B cell (primary cell): ENCODE measurements at regions of chr15 and their contacts with region 1.

Region 1: DNA sequence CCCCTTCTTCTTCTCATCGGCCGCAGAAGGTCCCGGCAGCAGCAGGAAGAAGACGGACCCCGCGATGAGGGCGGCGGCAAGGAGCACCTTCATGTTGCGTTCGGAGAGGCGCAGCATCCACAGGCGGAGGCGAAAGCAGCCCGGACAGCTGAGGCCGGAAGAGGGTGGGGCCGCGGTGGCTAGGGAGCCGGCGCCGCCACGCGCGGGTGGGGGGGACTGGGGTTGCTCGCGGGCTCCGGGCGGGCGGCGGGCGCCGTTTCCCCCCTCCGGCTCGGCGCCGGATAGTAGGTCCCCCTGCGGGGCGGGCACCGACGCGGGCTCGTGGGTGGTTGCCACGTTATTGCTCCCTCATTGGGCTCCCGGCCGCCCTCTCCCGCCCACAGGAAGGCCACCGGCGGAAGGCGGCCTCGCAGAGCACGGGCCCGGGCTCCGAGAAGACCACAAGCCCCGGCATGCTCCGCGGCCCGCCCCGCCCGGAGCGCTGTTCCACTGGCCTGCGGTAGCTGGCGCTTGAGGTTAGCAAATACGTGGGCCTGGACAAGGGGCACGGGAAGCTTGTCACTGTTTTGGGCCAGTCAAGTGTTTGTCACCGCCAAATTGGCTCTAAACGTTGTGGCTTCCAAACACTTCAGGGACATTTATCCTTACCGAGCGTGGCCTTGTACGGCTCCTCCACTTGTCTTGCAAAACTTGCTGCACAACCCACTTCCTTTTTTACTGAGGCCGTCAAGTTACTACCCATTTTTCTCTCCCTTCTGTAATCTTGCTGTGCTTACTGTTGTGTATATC is at the start of gene PPIB:
- DNase-seq: peak; percentile 98
- ATAC-seq: peak; percentile 91
- H3K4me3 ChIP-seq: peak within 1 kb of the TSS; percentile 65 to 86 (median 85)
- H3K4me3 Mint-ChIP-seq: peak within 1 kb of the TSS; percentile 92
- H3K27ac ChIP-seq: peak within 1 kb of the TSS; percentile 72 to 87
- H3K27ac Mint-ChIP-seq: peak within 1 kb of the TSS; percentile 96
- H3K4me1 ChIP-seq: peaks cover 42 to 58% of the 10 kb centered on the region in 2 donors
- H3K4me1 Mint-ChIP-seq: peaks cover 52% of the 10 kb centered on the region
- H3K27me3 ChIP-seq: no peaks in the 10 kb centered on the region
- H3K27me3 Mint-ChIP-seq: no peaks in the 10 kb centered on the region
- CTCF ChIP-seq: peak; percentile 32
- total RNA-seq, gene PPIB: 107 and 108 TPM in 2 replicates

Region 2: DNA sequence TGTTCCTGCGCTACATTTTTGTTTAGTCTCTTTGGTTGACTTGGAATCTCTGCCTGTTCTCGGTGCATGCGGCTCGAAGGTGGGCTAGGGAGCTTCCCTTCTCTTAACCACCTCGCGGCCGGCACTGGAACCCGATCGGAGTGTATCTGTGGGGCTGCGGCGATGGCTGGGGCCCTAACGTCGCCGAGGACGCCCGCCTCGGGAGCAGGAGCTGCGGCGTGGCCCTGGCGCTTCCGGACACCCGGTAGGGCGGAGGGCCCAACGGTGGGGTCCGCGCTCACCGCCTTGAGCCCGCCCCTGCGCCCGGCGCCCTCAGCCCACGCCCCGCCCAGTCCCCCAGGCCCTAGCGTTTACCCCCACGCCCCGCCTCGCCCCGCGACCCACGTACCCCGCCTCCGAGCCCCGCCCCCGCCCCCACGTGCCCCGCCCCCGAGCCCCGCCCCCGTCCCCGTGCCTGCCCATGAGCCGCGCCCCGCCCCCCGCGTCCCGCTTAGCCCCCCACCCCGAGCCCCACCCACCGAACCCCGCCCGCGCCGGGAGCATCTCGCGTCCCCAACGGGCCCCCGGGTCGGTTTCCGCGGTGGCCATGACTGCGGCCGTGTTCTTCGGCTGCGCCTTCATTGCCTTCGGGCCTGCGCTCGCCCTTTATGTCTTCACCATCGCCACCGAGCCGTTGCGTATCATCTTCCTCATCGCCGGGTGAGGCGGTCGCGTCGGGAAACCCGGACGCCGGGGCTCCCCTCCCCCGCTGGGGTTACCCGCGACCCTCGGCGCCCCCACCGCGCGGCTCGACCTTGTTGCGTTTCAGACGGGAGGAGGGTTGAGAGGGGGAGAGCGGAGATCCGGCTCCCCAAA is 885.8 kb before region 1 on chr15 and contains the start of gene APH1B:
- CTCF ChIA-PET with region 1: no interaction called
- POLR2A ChIA-PET with region 1: no interaction called
- intact Hi-C with region 1: loop called (anchors 1 kb)
- DNase-seq: peak; percentile 85
- ATAC-seq: peak; percentile 97
- H3K4me3 ChIP-seq: peak within 1 kb of the TSS; percentile 74 to 98 (median 94)
- H3K4me3 Mint-ChIP-seq: peak within 1 kb of the TSS; percentile 92
- H3K27ac ChIP-seq: peak within 1 kb of the TSS; percentile 67 to 79
- H3K27ac Mint-ChIP-seq: peak within 1 kb of the TSS; percentile 94
- H3K4me1 ChIP-seq: peaks cover 12 to 14% of the 10 kb centered on the region in 2 donors
- H3K4me1 Mint-ChIP-seq: peaks cover 19% of the 10 kb centered on the region
- H3K27me3 ChIP-seq: no peaks in the 10 kb centered on the region
- H3K27me3 Mint-ChIP-seq: no peaks in the 10 kb centered on the region
- CTCF ChIP-seq: no peak
- total RNA-seq, gene APH1B: 45.2 and 47.0 TPM in 2 replicates

Region 3: GRCh38 chr15:64180235-64180837 is 17.3 kb after region 1 on chr15:
- CTCF ChIA-PET with region 1: interaction called, 9 read pairs
- POLR2A ChIA-PET with region 1: interaction called, 3 read pairs
- intact Hi-C with region 1: loop called (anchors 1 kb)
- DNase-seq: peak; percentile 91
- ATAC-seq: peak; percentile 99
- H3K4me3 ChIP-seq: peak overlapping the region in 3 of 5 experiments; percentile 16 to 33 (median 31)
- H3K4me3 Mint-ChIP-seq: peak overlapping the region; percentile 74
- H3K27ac ChIP-seq: peak overlapping the region; percentile 72 to 94
- H3K27ac Mint-ChIP-seq: peak overlapping the region; percentile 86
- H3K4me1 ChIP-seq: peaks cover 23 to 24% of the 10 kb centered on the region in 2 donors
- H3K4me1 Mint-ChIP-seq: peaks cover 25% of the 10 kb centered on the region
- H3K27me3 ChIP-seq: no peaks in the 10 kb centered on the region
- H3K27me3 Mint-ChIP-seq: no peaks in the 10 kb centered on the region
- CTCF ChIP-seq: no peak

Region 4: DNA sequence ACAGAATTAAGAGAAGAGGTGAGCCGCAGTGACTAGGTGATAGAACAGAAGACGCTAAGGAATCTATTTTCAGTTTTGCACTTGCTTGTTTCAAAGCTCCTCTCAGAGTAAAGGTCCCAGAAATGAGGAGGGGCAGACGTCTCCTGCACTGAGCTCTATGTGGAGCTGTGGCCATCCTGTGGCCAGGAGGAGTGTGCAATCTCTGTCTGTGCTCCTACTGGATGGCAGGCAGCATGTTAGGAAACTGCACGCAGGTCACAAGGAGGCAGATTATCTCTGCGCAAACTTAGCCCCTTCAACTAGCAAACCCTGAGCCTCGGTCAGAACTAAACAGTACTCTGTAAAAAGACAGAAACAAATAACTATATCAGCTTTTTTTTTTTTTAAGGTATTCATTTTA is 30.9 kb after region 1 on chr15:
- CTCF ChIA-PET with region 1: no interaction called
- POLR2A ChIA-PET with region 1: no interaction called
- intact Hi-C with region 1: no loop called
- DNase-seq: no peak
- ATAC-seq: no peak
- H3K4me3 ChIP-seq: no peak overlapping the region
- H3K4me3 Mint-ChIP-seq: no peak overlapping the region
- H3K27ac ChIP-seq: no peak overlapping the region
- H3K27ac Mint-ChIP-seq: no peak overlapping the region
- H3K4me1 ChIP-seq: no peaks in the 10 kb centered on the region
- H3K4me1 Mint-ChIP-seq: no peaks in the 10 kb centered on the region
- H3K27me3 ChIP-seq: no peaks in the 10 kb centered on the region
- H3K27me3 Mint-ChIP-seq: no peaks in the 10 kb centered on the region
- CTCF ChIP-seq: no peak

Region 5: DNA sequence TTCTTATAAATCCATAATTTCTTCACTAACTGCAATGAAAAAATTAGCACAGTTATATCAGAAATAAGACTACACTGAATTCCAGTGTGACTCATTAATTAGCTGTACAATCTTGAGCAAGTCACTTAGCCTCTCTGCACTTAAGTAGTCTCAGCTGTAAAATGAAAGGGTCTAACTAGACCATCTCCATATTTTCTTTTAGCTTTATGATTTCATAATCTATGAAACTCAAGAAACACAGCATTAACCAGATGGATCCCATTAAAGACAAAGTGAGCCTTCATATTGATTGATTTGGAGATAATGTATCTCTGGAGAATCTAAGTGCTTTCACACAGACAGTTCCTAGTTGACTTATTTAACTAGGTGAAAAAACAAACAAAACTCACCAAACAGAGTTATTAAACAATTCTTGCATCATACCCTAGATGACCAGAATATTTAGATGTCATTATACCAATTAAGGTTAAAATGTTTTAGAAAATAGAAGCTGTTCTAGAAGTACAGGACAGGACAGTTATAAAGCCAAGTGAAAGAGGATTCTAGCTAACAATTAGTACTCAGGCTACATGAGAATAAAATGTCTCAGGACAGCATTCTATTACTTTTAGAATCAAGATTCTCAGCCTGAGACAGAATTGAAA is 181.7 kb after region 1 on chr15:
- CTCF ChIA-PET with region 1: no interaction called
- POLR2A ChIA-PET with region 1: no interaction called
- intact Hi-C with region 1: no loop called
- DNase-seq: no peak
- ATAC-seq: no peak
- H3K4me3 ChIP-seq: no peak overlapping the region
- H3K4me3 Mint-ChIP-seq: no peak overlapping the region
- H3K27ac ChIP-seq: no peak overlapping the region
- H3K27ac Mint-ChIP-seq: no peak overlapping the region
- H3K4me1 ChIP-seq: no peaks in the 10 kb centered on the region
- H3K4me1 Mint-ChIP-seq: peaks cover 10% of the 10 kb centered on the region
- H3K27me3 ChIP-seq: no peaks in the 10 kb centered on the region
- H3K27me3 Mint-ChIP-seq: no peaks in the 10 kb centered on the region
- CTCF ChIP-seq: no peak

Region 6: DNA sequence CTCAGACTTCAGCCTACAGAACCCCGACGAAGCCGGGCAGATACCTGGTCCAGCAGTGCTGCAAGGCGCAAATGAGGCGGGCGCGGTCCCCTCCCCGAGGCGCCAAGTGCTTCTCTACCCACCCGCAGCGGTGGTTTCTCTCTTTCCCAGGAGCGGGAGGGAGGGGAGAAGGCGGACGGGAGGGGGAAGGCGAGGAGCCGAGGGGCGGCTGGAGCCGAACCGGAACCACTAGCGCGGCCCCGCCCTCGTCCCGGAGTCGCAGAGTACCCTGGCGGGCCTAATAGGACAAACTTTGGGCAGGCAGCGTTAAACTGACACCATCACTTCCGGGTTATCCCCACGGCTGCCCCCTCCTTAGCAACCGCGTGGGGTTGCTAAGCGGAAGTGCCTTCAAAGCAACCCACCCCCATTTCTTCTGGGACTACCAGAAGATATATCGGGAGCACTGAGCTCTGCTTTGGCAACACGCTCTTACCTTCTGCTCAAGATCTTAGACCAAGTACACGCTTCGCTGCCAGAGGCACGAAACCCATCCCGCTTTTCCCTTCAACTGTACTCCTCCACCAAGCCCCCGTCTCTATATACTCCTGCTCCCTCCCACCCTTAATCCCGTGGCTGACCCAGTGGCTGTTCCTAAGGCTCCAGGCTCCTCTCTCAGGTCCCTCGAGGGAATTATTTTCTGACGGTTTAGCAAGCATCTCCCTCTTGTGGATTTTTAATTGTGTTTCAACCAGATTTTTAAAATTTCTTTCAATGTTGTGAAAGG is 193.1 kb after region 1 on chr15 and contains the start of gene CSNK1G1:
- CTCF ChIA-PET with region 1: no interaction called
- POLR2A ChIA-PET with region 1: interaction called, 3 read pairs
- intact Hi-C with region 1: loop called (anchors 1 kb)
- DNase-seq: peak; percentile 95
- ATAC-seq: peak; percentile 98
- H3K4me3 ChIP-seq: peak within 1 kb of the TSS; percentile 75 to 92 (median 86)
- H3K4me3 Mint-ChIP-seq: peak within 1 kb of the TSS; percentile 94
- H3K27ac ChIP-seq: peak within 1 kb of the TSS; percentile 50 to 78
- H3K27ac Mint-ChIP-seq: peak within 1 kb of the TSS; percentile 88
- H3K4me1 ChIP-seq: peaks cover 9 to 16% of the 10 kb centered on the region in 2 donors
- H3K4me1 Mint-ChIP-seq: peaks cover 15% of the 10 kb centered on the region
- H3K27me3 ChIP-seq: no peaks in the 10 kb centered on the region
- H3K27me3 Mint-ChIP-seq: no peaks in the 10 kb centered on the region
- CTCF ChIP-seq: peak; percentile 55
- total RNA-seq, gene CSNK1G1: 39.0 and 40.3 TPM in 2 replicates

Region 7: DNA sequence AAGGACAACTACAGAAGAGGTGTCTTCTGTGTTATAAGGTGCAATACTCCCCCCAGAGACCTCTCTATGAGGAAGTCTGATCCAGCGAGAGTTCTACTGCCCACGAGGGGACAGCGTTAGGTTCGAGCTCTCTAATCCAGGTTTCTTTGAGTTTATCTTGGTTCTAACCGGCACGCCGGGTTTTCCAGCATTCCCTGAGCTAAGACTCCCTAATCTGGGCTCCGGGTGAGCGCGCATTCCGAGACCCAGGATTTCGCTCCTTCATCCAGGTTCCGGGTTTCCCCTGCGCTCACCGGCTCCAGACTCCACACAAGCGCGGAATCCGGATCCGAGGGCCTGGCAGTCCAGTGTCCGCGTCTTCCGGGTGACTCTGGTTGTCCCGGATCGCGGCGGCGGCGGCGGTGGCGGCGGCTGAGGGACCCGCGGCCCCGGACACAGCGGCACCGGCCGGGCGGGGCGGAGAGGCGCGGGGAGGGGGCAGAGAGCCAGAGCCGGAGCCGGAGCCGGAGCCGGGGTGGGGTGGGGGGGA is 297.2 kb after region 1 on chr15 and contains the start of gene ZNF609:
- CTCF ChIA-PET with region 1: no interaction called
- POLR2A ChIA-PET with region 1: no interaction called
- intact Hi-C with region 1: loop called (anchors 2 kb)
- DNase-seq: peak; percentile 89
- ATAC-seq: peak; percentile 86
- H3K4me3 ChIP-seq: peak within 1 kb of the TSS; percentile 52 to 72 (median 62)
- H3K4me3 Mint-ChIP-seq: peak within 1 kb of the TSS; percentile 86
- H3K27ac ChIP-seq: peak within 1 kb of the TSS in 1 of 2 donors; percentile 53
- H3K27ac Mint-ChIP-seq: peak within 1 kb of the TSS; percentile 75
- H3K4me1 ChIP-seq: peaks cover 60 to 61% of the 10 kb centered on the region in 2 donors
- H3K4me1 Mint-ChIP-seq: peaks cover 62% of the 10 kb centered on the region
- H3K27me3 ChIP-seq: no peaks in the 10 kb centered on the region
- H3K27me3 Mint-ChIP-seq: no peaks in the 10 kb centered on the region
- CTCF ChIP-seq: no peak
- total RNA-seq, gene ZNF609: 32.9 and 36.7 TPM in 2 replicates